Motor neuron (in vitro differentiated cells): ENCODE measurements at regions of chr5 and their contacts with region 1.

Region 1: DNA sequence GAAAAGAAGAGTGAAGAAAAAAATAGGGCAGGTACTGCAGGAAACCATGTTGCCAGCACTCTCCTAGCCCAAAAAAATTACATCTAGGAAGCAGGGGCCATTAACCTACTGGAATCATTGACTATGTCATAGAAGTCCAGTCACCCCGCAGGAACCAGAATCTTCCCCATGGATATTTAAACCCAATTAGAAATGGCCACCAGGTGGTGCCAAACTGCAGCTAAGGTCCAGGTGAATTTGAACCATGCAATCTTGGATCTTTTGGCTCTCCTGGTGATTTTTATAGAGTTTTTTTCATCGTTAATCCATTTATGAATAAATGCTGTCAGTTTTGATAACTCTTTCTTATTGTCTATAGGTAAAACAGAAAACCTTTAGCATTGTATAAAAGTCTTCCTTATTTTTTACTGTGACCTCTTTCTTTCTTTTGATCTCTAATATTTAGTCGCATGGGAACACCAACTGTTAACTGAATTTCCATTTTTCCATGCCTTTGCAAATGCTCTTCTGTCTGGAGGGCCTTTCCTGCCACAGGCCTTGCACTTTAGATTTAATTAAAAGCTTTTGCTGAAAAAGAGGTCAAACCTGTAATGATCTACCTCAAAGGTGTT is 147.5 kb upstream of the FGF10 start:
- ATAC-seq: peak in 3 of 8 experiments; percentile 41 to 65 (median 61)
- H3K4me3 ChIP-seq: no peak overlapping the region
- H3K27ac ChIP-seq: no peak overlapping the region
- H3K4me1 ChIP-seq: no peaks in the 10 kb centered on the region

Region 2: DNA sequence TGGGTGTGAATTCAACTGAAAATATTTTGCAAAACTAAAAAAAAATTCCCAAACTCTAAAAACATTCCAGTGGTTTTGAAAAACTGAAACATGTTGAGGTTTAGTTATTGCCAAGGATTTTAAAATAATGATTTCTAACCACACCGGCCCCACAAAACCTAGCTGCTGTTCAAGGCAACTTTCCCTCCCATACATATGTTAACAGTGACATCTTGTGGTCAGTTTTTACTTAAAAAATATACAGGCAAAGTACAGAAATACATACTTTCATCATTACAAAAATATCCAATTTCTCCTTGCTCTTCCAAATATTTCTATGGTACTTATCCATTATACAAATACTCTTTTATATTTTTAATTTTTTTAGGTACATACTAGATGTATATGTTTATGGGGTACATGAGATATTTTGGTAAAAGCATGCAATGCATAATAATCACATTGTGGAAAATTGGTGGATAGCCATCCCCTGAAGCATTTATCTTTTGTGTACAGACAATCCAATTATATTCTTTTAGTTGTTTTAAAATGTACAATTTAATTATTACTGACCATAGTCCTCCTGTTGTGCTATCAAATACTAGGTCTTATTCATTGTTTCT is 237.6 kb after region 1 on chr5:
- in situ Hi-C with region 1: loop called in 3 of 9 experiments (anchors 10 to 25 kb)
- ATAC-seq: peak in 4 of 8 experiments; percentile 28 to 65 (median 50)
- H3K4me3 ChIP-seq: no peak overlapping the region
- H3K27ac ChIP-seq: no peak overlapping the region
- H3K4me1 ChIP-seq: peaks cover 0 to 2% of the 10 kb centered on the region in 2 donors